ENCODE measurements at regions of chr4 and their contacts with region 1.

Region 1: GRCh38 chr4:76067652-76068286 is 6.7 kb upstream of the ART3 start:
- DNase-seq: peak; percentile 57
- H3K4me3 ChIP-seq: no peak overlapping the region
- H3K27ac ChIP-seq: no peak overlapping the region
- H3K4me1 ChIP-seq: no peaks in the 10 kb centered on the region
- H3K27me3 ChIP-seq: no peaks in the 10 kb centered on the region
- CTCF ChIP-seq: peak; percentile 63

Region 2: GRCh38 chr4:75916091-75916661 is 151.6 kb before region 1 on chr4:
- CTCF ChIA-PET with region 1: no interaction called
- POLR2A ChIA-PET with region 1: no interaction called
- intact Hi-C with region 1: loop called (anchors 5 kb)
- DNase-seq: peak; percentile 38
- H3K4me3 ChIP-seq: no peak overlapping the region
- H3K27ac ChIP-seq: peak overlapping the region; percentile 63
- H3K4me1 ChIP-seq: peaks cover 4% of the 10 kb centered on the region
- H3K27me3 ChIP-seq: no peaks in the 10 kb centered on the region
- CTCF ChIP-seq: peak; percentile 75

Region 3: DNA sequence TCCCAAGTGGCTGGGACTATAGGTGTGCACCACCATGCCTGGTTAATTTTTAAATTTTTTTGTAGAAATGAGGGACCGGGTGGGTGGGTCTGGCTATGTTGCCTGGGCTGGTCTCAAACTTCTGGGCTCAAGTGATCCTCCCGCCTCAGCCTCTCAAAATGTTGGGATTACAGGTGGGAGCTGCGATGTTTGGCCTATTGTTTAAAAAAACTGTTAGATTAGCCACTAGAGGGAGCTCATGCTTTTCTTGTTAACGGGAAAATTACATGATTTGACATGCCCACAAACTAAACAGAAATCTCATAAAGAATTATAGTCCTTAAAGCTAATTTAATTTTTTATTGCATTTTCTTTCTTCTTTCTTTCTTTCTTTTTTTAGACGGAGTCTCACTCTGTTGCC is 72.0 kb before region 1 on chr4:
- CTCF ChIA-PET with region 1: interaction called, 4 read pairs
- POLR2A ChIA-PET with region 1: no interaction called
- intact Hi-C with region 1: loop called (anchors 1 kb)
- DNase-seq: peak; percentile 49
- H3K4me3 ChIP-seq: no peak overlapping the region
- H3K27ac ChIP-seq: no peak overlapping the region
- H3K4me1 ChIP-seq: no peaks in the 10 kb centered on the region
- H3K27me3 ChIP-seq: no peaks in the 10 kb centered on the region
- CTCF ChIP-seq: peak; percentile 47

Region 4: GRCh38 chr4:76002176-76002575 is 65.6 kb before region 1 on chr4:
- CTCF ChIA-PET with region 1: no interaction called
- POLR2A ChIA-PET with region 1: no interaction called
- intact Hi-C with region 1: loop called (anchors 2 kb)
- DNase-seq: no peak
- H3K4me3 ChIP-seq: no peak overlapping the region
- H3K27ac ChIP-seq: no peak overlapping the region
- H3K4me1 ChIP-seq: no peaks in the 10 kb centered on the region
- H3K27me3 ChIP-seq: no peaks in the 10 kb centered on the region
- CTCF ChIP-seq: no peak